ENCODE measurements at regions of chr17 and their contacts with region 1.

Region 1: GRCh38 chr17:56679115-56679766 is 85.7 kb downstream of the NOG start:
- DNase-seq: no peak
- H3K4me3 ChIP-seq: peak overlapping the region in 3 of 4 donors; percentile 27 to 30 (median 28)
- H3K27ac ChIP-seq: no peak overlapping the region
- H3K4me1 ChIP-seq: peaks cover 0 to 11% (median 10%) of the 10 kb centered on the region in 4 donors
- H3K27me3 ChIP-seq: peaks cover 3 to 46% (median 19%) of the 10 kb centered on the region in 3 donors
- CTCF ChIP-seq: peak in 3 of 4 experiments; percentile 25 to 58 (median 54)
- EP300 ChIP-seq: no peak
- POLR2A ChIP-seq: no peak

Region 2: DNA sequence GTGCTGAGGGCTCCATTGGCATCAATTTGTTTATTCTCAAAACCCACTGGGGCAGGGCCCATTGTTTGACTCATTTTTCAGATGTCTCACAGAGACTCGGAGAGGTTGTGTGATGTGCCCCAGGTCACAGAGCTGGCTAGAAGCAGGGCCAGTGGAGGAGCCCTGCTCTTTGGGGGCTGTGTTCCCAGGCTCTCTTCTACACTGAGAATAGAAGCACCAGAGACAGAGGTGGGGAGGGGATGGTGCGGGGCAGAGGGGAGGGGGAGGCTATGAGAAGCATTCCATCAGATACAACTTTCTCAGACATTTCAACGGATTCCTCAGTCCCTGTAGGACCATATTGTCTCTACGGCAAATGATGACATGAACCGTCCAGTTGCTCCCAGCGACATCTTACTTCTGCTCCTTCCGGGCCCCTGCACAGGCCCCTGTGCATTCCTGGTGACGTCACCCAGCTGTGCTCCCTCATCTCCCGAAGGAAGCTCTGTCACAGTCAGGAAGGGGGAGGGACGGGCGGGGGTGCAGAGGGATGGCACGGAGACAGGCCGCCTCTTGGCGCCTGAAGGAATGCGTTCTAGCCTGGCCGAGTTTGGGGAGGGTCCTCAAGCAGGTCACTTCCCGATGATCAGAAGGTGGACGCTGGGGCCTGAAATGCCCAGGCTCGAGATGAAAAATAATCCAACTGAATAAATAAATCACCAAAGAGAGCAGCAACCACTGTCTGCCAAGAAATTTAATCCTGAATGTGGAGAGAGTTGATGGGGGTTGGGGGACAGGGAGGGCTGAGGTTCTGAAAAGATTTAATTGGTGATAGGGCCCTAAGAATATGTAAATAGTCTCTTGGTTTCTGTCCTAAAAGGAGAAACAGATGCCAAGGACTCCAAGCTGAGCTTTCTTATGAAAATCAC is 28.3 kb after region 1 on chr17:
- intact Hi-C with region 1: no loop called
- DNase-seq: no peak
- H3K4me3 ChIP-seq: no peak overlapping the region
- H3K27ac ChIP-seq: no peak overlapping the region
- H3K4me1 ChIP-seq: peaks cover 0 to 8% (median 3%) of the 10 kb centered on the region in 4 donors
- H3K27me3 ChIP-seq: peaks cover 0 to 7% (median 0%) of the 10 kb centered on the region in 3 donors
- CTCF ChIP-seq: no peak
- EP300 ChIP-seq: no peak
- POLR2A ChIP-seq: no peak

Region 3: DNA sequence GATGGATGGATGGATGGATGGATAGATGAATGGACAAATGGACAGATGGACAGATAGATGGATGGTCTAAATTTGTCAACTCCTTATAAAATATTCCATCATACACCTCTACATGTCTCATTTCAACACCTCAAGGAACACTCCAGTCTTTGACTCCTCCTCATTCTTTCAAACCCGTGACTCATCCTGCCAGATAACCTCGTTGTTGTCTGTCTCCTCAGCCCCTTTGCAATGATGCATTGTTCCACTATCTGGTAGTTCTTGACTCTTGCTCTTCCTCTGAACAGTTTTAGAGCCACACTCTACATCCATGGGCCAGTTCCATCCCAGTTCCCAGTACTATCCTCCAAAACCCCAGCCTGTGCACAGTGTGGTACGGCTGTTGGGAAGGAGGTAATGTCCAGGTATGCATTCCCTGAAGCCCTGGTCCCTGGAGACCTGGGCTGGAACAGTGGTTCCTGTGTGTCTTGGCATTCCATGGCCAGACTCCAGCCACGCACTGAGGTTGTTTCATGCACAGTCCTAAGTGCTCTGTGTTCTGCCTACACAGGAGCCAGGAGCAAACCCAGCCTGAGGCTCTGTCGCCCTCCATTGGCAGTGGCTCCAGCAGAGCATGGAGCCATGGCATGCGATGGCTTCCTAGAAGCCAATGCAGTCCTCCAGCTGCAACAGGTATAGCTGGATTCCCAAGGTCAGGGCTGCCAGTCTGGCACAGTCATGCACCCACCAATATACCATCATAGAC is 48.8 kb after region 1 on chr17:
- intact Hi-C with region 1: loop called (anchors 10 kb)
- DNase-seq: no peak
- H3K4me3 ChIP-seq: no peak overlapping the region
- H3K27ac ChIP-seq: no peak overlapping the region
- H3K4me1 ChIP-seq: no peaks in the 10 kb centered on the region
- H3K27me3 ChIP-seq: no peaks in the 10 kb centered on the region
- CTCF ChIP-seq: no peak
- EP300 ChIP-seq: no peak
- POLR2A ChIP-seq: no peak

Measured in sigmoid colon (tissue), 7 donors.